ENCODE measurements at regions of chr1 and their contacts with region 1.

Region 1: DNA sequence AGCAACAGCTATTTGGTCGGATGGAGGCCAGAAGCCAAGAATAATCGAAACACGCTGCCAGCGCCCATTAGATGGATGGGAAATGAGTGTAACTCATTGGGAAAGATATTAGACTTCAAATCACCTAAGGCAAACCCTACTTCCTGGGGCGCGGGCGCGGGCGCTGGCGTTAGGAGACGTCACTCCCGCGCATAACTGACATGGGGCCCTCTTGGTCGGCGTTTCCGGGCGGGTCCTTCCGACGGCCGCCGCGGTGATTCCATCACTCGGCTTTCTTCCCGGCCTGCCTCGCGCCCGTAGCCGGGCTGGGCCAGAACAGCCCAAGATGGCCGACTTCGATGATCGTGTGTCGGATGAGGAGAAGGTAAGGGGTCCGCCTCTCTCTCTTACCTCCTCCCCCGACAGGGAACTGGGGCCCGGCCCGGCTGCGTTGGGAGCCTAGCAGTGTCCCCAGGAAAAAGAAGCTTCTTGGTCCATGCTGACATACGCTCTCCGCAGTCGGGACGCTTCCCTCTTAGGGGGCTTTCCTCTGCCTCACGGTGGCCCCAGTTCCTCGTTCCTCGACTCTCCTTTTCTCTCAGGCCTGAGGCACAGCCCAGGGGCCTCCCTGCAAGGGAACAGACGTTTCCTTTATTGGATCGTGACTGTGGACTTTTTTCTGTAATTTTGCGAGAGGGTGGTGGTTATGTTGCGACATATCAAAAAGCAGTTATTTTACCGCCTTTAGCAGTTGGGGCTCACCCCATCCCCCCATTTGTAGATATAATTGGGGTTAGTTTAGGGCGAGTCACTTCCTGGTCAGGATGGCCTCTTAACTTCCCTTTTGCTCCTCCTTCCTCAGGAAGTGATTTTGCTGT is at the start of gene CAPZA1:
- DNase-seq: peak; percentile 82
- ATAC-seq: peak; percentile 83
- H3K4me3 Mint-ChIP-seq: peak within 1 kb of the TSS; percentile 97
- H3K27ac Mint-ChIP-seq: peak within 1 kb of the TSS; percentile 99
- H3K4me1 Mint-ChIP-seq: peaks cover 54% of the 10 kb centered on the region
- H3K27me3 Mint-ChIP-seq: no peaks in the 10 kb centered on the region
- CTCF ChIP-seq: no peak
- total RNA-seq, gene CAPZA1: 221 and 227 TPM in 2 replicates

Region 2: DNA sequence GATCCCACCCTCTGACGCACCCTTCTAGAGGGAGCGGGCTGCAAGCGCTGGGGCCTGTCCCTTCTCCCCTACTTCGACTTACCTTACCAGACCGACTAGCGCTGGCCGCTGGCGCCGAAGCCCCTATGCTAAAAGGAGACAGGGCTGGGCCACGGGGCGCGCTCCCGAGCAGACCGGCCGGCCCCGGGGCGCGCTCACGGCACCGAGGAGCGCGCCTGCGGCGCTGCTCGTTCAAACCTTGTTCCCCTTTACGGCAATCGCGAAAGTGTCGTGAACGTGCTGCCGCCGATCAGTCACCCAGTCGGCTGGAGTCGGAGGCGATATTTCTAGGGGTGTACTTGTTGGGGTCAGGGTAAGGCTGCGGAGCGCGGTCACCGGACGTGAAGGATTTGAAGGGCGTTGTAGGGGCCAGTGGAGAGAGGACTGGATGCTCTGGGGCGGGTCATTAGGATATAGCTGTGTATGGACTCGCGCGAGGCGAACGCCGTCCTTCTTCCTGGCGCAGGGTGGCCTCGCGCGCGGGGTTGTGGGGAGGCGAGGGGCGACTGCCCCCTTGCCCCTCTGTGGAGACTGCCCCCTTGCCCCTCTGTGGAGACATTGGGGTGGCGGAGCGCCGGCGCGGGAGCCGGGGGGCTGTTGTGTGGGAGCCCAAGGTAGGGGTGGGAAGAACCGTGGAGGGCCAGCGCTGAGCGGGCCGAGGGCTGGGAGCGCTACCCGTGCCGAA is 1479.6 kb before region 1 on chr1 and contains the starts of genes CEPT1 and DRAM2:
- CTCF ChIA-PET with region 1: no interaction called
- POLR2A ChIA-PET with region 1: interaction called, 3 read pairs
- intact Hi-C with region 1: loop called (anchors 5 kb)
- DNase-seq: peak; percentile 90
- ATAC-seq: peak; percentile 78
- H3K4me3 Mint-ChIP-seq: peak within 1 kb of the TSS; percentile 100
- H3K27ac Mint-ChIP-seq: peak within 1 kb of the TSS; percentile 99
- H3K4me1 Mint-ChIP-seq: peaks cover 74% of the 10 kb centered on the region
- H3K27me3 Mint-ChIP-seq: no peaks in the 10 kb centered on the region
- CTCF ChIP-seq: no peak
- total RNA-seq, gene CEPT1: 74.4 and 87.0 TPM in 2 replicates
- total RNA-seq, gene DRAM2: 61.8 and 77.6 TPM in 2 replicates

Region 3: DNA sequence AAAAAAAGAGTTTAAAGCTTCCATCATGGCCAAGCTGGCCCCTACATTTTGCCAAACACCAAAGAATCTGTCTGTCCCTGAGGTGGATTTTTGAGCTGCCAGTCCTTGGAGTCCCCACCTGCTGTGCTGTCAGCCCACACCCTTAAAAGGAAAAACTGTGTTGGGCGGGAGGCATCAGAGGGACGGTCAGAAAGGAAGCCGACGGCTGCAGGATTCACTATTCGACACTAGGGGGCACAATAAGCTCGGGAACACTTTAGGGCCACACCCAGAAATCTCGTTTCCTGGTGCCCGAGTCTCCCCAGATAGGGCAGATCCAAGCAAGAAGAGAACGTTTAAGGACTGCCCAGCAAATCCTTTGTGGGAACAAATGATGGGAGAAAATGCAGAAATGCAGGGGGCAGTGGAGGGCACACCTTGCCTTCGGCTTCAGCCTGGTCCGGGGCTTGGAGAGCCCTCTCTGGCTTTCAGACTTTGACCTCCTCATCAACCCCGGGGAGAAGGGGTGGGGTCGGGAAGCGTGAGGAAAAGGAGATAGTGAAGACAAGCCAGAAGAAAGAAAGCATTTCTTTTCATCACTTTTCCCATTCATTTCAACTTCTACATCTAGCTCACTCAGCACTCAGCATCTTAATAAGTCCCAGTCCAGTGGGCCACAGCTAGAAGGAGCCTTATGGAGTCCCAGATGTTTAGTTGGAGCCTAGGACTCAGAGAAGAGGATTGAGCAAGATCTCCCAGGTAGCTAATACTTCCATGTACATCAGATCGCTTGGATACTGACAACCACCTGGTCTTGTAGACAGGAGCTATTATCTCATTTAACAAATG is 228.8 kb before region 1 on chr1:
- CTCF ChIA-PET with region 1: interaction called, 35 read pairs
- POLR2A ChIA-PET with region 1: interaction called, 12 read pairs
- intact Hi-C with region 1: loop called (anchors 1 kb)
- DNase-seq: peak; percentile 66
- ATAC-seq: peak; percentile 88
- H3K4me3 Mint-ChIP-seq: peak overlapping the region; percentile 66
- H3K27ac Mint-ChIP-seq: peak overlapping the region; percentile 46
- H3K4me1 Mint-ChIP-seq: peaks cover 31% of the 10 kb centered on the region
- H3K27me3 Mint-ChIP-seq: peaks cover 14% of the 10 kb centered on the region
- CTCF ChIP-seq: peak; percentile 89

Region 4: DNA sequence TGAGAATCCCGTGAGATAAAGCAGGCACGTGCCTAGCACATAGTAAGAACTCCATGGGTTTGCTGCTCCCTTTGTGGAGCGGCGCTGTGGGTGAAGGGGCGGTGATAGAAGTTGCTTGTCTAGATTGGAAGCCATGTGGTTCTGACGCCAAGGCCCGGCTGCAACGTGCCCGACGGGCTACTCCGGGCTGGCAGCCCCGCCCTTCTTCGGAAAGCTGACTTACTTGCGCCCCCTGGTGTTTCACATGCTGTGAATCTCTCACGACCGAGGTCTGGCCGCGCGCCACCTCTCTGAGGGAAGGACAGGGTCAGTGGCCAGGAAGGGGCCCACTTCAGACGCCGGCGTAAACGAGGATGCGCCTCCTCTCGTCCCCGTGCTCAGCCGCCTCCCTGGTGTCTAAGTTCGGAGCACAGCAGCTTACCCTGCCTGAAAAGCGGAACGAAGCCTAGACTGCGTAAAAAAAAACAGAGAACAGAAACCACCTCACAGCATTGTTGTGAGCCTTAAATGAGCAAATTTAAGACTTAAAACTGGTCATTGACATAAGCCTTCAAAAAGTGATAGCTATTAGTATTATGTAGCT is 153.6 kb before region 1 on chr1:
- CTCF ChIA-PET with region 1: no interaction called
- POLR2A ChIA-PET with region 1: interaction called, 12 read pairs
- intact Hi-C with region 1: loop called (anchors 1 kb)
- DNase-seq: peak; percentile 81
- ATAC-seq: peak; percentile 93
- H3K4me3 Mint-ChIP-seq: peak overlapping the region; percentile 77
- H3K27ac Mint-ChIP-seq: peak overlapping the region; percentile 88
- H3K4me1 Mint-ChIP-seq: peaks cover 54% of the 10 kb centered on the region
- H3K27me3 Mint-ChIP-seq: peaks cover 16% of the 10 kb centered on the region
- CTCF ChIP-seq: no peak

Region 5: GRCh38 chr1:112674439-112674985 is 54.8 kb after region 1 on chr1 and contains the start of gene MOV10:
- CTCF ChIA-PET with region 1: interaction called, 3 read pairs
- POLR2A ChIA-PET with region 1: interaction called, 39 read pairs
- intact Hi-C with region 1: loop called (anchors 1 kb)
- DNase-seq: peak; percentile 45
- ATAC-seq: peak; percentile 69
- H3K4me3 Mint-ChIP-seq: peak within 1 kb of the TSS; percentile 97
- H3K27ac Mint-ChIP-seq: peak within 1 kb of the TSS; percentile 88
- H3K4me1 Mint-ChIP-seq: peaks cover 35% of the 10 kb centered on the region
- H3K27me3 Mint-ChIP-seq: no peaks in the 10 kb centered on the region
- CTCF ChIP-seq: no peak
- total RNA-seq, gene MOV10: 33.3 and 36.4 TPM in 2 replicates

Region 6: GRCh38 chr1:112700290-112701226 is 80.8 kb after region 1 on chr1:
- CTCF ChIA-PET with region 1: no interaction called
- POLR2A ChIA-PET with region 1: interaction called, 15 read pairs
- intact Hi-C with region 1: no loop called
- DNase-seq: peak; percentile 71
- ATAC-seq: peak; percentile 75
- H3K4me3 Mint-ChIP-seq: peak overlapping the region; percentile 32
- H3K27ac Mint-ChIP-seq: peak overlapping the region; percentile 83
- H3K4me1 Mint-ChIP-seq: peaks cover 64% of the 10 kb centered on the region
- H3K27me3 Mint-ChIP-seq: no peaks in the 10 kb centered on the region
- CTCF ChIP-seq: no peak

Region 7: GRCh38 chr1:112955781-112956543 is 336.2 kb after region 1 on chr1 and contains the start of gene SLC16A1:
- CTCF ChIA-PET with region 1: no interaction called
- POLR2A ChIA-PET with region 1: interaction called, 4 read pairs
- intact Hi-C with region 1: loop called (anchors 5 kb)
- DNase-seq: peak; percentile 89
- ATAC-seq: peak; percentile 82
- H3K4me3 Mint-ChIP-seq: peak within 1 kb of the TSS; percentile 98
- H3K27ac Mint-ChIP-seq: peak within 1 kb of the TSS; percentile 98
- H3K4me1 Mint-ChIP-seq: peaks cover 49% of the 10 kb centered on the region
- H3K27me3 Mint-ChIP-seq: no peaks in the 10 kb centered on the region
- CTCF ChIP-seq: no peak
- total RNA-seq, gene SLC16A1: 17.8 and 17.9 TPM in 2 replicates

Measured in activated B cell treated with CpG ODN at 0.5 μM for 24 hours (primary cell).